ENCODE measurements at regions of chr1 and their contacts with region 1.

Region 1: GRCh38 chr1:32063261-32063681 is 9.5 kb upstream of the TMEM39B start:
- DNase-seq: no peak

Region 2: DNA sequence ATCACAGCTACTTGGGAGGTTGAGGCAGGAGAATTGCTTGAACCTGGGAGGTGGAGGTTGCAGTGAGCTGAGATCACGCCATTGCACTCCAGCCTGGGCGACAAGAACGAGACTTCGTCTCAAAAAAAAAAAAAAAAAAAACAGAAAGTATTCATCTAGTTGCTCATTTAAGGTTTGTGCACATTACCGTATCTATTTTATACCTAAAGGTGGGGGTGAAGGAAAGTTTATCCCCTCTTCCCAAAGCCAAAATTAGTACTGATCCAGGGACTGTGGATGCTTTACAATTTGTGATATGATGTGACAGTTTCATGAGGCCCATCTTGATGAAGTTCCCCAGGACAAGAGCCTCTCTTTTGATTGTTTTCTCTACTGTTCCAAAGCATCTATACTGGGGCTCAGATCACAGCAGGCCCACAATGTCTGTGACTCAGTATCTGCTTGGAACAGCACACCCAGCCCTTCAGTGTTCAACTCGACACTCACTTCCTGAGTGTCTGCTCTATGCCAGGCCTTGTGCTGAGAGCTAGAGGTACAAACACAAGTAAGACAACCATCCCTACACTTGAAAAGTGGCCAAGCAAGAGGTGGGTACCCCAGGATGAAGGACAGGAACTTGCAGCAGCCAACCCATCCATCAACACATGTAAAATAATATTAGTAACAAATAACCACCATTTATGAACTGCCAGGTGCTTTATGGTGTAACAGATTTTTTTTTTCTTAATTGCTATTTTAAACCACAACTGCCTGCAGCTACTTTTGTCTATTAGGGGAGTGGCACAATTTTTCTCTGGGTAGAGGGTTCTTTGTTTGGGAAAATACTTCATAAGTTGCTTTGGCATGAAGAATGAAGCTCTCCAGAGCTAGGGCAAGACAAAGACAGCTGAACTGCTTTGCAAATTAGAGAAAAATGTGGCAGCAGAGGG is 78.6 kb before region 1 on chr1:
- intact Hi-C with region 1: loop called in 1 of 2 experiments (anchors 10 kb)
- DNase-seq: peak; percentile 45

Measured in posterior vena cava (tissue), 2 donors.